GM12878 (cell line): ENCODE measurements at regions of chr11 and their contacts with region 1.

Region 1: GRCh38 chr11:35919244-35919643 is 24.6 kb upstream of the LDLRAD3 start:
- DNase-seq: no peak
- ATAC-seq: no peak
- H3K4me3 ChIP-seq: no peak overlapping the region
- H3K27ac ChIP-seq: no peak overlapping the region
- H3K4me1 ChIP-seq: peaks cover 39% of the 10 kb centered on the region
- H3K27me3 ChIP-seq: no peaks in the 10 kb centered on the region
- CTCF ChIP-seq: no peak
- EP300 ChIP-seq: no peak
- POLR2A ChIP-seq: no peak
- RAD21 ChIP-seq: no peak

Region 2: DNA sequence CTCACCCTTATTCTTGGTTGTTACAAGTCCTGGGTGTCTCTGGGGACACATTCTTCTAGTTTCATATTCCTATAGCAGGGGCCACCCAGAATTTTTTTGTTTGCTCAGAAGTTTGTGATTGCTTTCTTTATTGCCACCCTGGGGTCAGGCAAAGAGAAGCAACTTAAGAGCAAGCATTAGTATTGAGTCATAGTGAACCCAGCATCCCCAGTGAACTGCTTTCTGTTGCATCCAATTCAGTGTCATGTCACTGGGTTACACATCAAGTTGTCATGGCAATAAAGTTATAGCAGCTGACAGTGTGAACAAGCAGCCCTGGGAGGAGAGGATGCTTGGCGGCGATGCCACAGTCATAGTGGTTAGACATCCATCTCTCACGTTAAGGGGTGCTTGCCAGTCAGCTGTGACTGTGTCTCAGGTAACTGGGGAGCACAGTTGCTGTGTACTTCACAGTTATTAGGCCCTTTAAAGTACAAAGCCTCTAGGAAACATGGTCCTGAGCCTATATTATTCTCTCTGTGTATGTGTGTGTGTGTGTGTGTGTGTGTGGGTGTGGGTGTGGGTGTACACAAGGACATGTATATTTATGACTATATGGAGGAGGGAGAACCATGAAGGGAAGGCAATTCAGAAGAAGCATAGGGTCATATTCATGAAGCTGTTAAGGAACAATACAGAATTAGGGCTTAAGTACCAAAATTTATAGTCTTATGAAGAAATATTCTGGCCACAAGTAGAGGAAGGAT is 204.2 kb before region 1 on chr11:
- CTCF ChIA-PET with region 1: no interaction called
- POLR2A ChIA-PET with region 1: no interaction called
- RAD21 ChIA-PET with region 1: no interaction called
- SMC1A ChIA-PET with region 1: interaction called, 3 read pairs
- in situ Hi-C with region 1: no loop called
- intact Hi-C with region 1: loop called (anchors 10 kb)
- DNase-seq: peak; percentile 77
- ATAC-seq: peak; percentile 91
- H3K4me3 ChIP-seq: no peak overlapping the region
- H3K27ac ChIP-seq: no peak overlapping the region; the same call in 1 of the 2 replicates
- H3K4me1 ChIP-seq: peaks cover 8% of the 10 kb centered on the region; the same call in 1 of the 2 replicates
- H3K27me3 ChIP-seq: no peaks in the 10 kb centered on the region
- CTCF ChIP-seq: no peak
- EP300 ChIP-seq: peak; percentile 47 to 55; a peak in 2 of 4 replicates
- POLR2A ChIP-seq: no peak
- RAD21 ChIP-seq: peak; percentile 13; the same call in 1 of the 2 replicates